RWPE1 (cell line): ENCODE measurements at regions of chr10 and their contacts with region 1.

Region 1: DNA sequence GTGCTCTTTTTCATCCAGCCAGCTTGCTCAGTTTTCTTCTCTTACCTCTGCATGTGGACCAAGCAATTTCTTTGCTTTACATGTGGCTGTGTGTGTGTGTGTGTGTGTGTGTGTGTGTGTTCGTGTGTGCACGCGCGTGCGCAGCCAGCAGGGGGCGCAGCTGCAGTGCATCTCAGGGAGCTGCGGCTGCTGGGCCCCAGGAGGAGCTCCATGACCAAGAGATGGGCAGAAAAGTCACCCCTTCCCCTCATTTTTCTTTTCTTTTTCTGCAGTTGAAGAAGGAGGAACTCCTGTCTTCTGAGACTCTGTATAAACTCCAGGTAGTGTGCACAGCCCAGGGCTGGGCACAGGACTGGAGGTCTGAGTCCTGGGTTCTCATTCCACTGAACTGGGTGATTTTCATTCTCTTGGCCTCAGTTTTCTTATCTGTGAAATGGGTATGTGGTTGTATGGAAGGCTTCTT is 41.8 kb downstream of the BLNK start:
- DNase-seq: peak; percentile 68
- H3K27ac ChIP-seq: no peak overlapping the region
- CTCF ChIP-seq: peak; percentile 86

Region 2: DNA sequence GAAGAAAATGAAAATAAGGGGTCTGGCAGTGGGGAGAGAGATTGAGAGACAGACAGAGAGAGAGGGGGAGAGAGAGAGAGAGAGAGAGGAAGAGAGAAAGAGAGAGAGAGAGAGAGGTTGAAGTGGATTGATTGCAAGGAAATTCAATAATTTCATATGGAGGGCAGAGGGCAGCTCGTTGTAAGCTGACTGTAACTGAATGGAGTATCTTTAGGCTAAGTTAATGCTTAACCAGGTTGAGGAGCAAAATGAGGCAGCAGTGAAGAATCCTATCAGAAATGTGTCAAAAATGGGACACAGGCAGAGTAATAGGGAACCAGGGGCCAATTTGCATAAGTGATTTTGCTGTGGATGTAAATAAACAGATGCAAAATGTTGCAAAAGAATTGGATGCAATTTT is 20.8 kb after region 1 on chr10:
- CTCF ChIA-PET with region 1: interaction called, 11 read pairs
- POLR2A ChIA-PET with region 1: interaction called, 10 read pairs
- DNase-seq: no peak
- H3K27ac ChIP-seq: no peak overlapping the region
- CTCF ChIP-seq: no peak

Region 3: GRCh38 chr10:96263669-96264068 is 34.1 kb after region 1 on chr10:
- CTCF ChIA-PET with region 1: interaction called, 12 read pairs
- POLR2A ChIA-PET with region 1: no interaction called
- DNase-seq: no peak
- H3K27ac ChIP-seq: no peak overlapping the region
- CTCF ChIP-seq: no peak

Region 4: GRCh38 chr10:96287392-96288105 is 58.0 kb after region 1 on chr10:
- CTCF ChIA-PET with region 1: interaction called, 123 read pairs
- POLR2A ChIA-PET with region 1: no interaction called
- DNase-seq: peak; percentile 21
- H3K27ac ChIP-seq: peak overlapping the region; percentile 33; the same call in 1 of the 2 replicates
- CTCF ChIP-seq: no peak

Region 5: DNA sequence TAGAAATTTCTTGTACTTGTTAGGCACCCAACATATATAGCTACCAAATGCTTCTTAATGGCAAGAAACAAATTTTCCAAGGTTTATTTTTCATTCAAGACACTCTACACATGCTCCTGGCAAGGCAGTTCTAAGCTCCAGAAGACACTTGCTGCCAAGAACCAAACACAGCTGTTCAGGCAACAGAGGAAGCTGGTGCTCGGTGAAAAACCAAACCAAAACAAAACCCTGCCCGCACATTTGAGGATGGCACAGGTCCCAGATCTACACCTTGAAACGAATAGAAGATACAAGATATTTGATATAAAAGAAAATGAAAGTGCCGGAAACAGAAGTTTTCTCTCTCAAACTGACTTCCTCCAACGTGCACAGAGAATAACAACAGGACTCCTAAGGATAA is 69.8 kb after region 1 on chr10:
- CTCF ChIA-PET with region 1: interaction called, 123 read pairs
- POLR2A ChIA-PET with region 1: no interaction called
- DNase-seq: no peak
- H3K27ac ChIP-seq: no peak overlapping the region
- CTCF ChIP-seq: no peak